AG04449 (cell line): ENCODE measurements at regions of chr6 and their contacts with region 1.

Region 1: DNA sequence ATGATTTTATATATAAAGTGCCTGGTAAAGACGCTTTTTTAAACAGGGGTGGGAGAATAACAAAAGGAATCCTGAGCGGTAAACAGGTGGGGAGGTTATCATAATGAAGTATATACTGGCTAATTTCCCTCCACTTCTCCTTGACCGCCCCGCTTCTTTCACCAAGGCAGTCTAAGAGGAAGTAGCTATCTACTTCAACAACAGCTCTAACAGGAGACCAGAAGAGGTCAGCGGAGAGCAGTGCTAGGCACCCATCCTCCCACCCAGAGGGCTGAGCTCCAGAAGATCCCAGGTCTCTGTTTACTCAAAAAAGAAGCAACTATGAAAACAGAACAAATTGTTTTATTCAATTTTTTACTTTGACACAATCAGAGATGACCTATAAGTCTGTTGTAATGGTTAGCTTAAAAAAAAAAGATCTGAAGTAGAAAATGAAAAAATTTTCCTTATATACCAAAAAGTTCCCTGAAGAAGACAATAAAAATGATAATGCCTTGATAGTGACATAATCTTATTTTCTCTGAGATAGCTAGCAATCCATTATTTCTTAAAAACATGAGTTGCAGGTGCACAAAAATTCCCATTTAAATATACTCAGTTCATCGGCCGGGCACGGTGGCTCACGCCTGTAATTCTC is 141.1 kb downstream of the PDSS2 start:
- DNase-seq: no peak
- H3K4me3 ChIP-seq: no peak overlapping the region
- CTCF ChIP-seq: peak; percentile 78

Region 2: GRCh38 chr6:107228754-107229153 is 89.5 kb before region 1 on chr6:
- CTCF ChIA-PET with region 1: no interaction called
- POLR2A ChIA-PET with region 1: no interaction called
- DNase-seq: no peak
- H3K4me3 ChIP-seq: no peak overlapping the region
- CTCF ChIP-seq: no peak

Region 3: DNA sequence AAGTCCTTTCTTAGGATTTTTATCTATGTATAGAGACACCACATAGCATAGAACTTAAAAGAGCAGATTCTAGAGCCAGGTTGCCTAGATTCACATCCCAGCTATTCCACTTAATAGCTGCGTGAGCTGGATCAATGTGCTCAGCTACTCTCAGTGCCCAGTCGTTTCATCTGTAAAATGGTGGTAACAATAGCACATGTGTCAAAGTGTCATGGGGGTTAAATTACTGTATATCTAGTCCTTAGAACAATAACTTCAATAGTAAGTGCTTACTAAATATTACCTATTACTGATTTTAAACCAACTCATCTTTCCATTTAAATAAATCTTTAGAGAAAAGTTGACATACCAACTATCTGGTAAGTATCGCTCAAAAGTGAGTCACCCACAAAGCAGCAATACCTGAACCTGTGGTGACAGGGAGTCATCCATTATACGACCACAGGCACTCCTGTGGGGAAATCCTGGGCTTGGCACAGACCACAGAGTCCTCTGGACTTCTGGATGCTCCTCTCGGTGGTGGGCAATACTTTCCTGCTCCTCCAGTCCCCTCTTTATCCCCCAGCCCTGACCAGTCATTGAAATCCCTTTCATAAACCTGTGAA is 13.7 kb before region 1 on chr6:
- CTCF ChIA-PET with region 1: interaction called, 11 read pairs
- POLR2A ChIA-PET with region 1: no interaction called
- DNase-seq: no peak
- H3K4me3 ChIP-seq: no peak overlapping the region
- CTCF ChIP-seq: no peak

Region 4: DNA sequence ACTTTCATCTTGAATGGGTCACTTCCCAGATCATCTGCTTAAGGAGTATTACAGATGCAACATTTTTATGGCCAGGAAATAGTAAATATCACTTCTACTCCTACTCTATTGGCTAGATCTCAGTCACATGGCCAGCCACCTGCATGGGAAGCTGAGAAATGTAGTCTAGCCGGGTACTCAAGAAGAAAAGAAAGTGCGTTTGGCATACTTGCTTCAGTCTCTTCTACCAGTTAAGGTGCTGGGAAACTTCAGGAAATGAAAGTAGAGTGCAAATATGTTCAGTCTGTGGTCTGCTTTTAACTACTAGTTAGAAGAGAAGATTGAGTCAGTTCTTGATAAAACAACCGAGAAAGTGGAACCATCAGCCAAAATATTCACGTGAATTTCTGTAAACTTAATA is 11.9 kb after region 1 on chr6:
- CTCF ChIA-PET with region 1: interaction called, 18 read pairs
- POLR2A ChIA-PET with region 1: no interaction called
- DNase-seq: no peak
- H3K4me3 ChIP-seq: no peak overlapping the region
- CTCF ChIP-seq: no peak

Region 5: GRCh38 chr6:107459283-107460082 is 141.3 kb after region 1 on chr6 and contains the start of gene PDSS2:
- CTCF ChIA-PET with region 1: interaction called, 25 read pairs
- POLR2A ChIA-PET with region 1: no interaction called
- DNase-seq: peak; percentile 75
- H3K4me3 ChIP-seq: peak within 1 kb of the TSS; percentile 96
- CTCF ChIP-seq: peak; percentile 69

Region 6: GRCh38 chr6:107560657-107561056 is 242.4 kb after region 1 on chr6:
- CTCF ChIA-PET with region 1: no interaction called
- POLR2A ChIA-PET with region 1: no interaction called
- DNase-seq: no peak
- H3K4me3 ChIP-seq: no peak overlapping the region
- CTCF ChIP-seq: no peak